ENCODE measurements at regions of chr1 and their contacts with region 1.

Region 1: GRCh38 chr1:94025383-94026340 is 95.3 kb downstream of the ABCA4 start:
- DNase-seq: no peak
- ATAC-seq: peak; percentile 60 to 69
- H3K4me3 ChIP-seq: no peak overlapping the region
- H3K27ac ChIP-seq: no peak overlapping the region
- H3K4me1 ChIP-seq: peaks cover 0 to 3% of the 10 kb centered on the region in 2 donors
- H3K27me3 ChIP-seq: no peaks in the 10 kb centered on the region
- CTCF ChIP-seq: peak; percentile 64 to 76 (median 70)
- POLR2A ChIP-seq: no peak

Region 2: GRCh38 chr1:93878889-93879586 is 146.6 kb before region 1 on chr1 and contains the start of gene DNTTIP2:
- in situ Hi-C with region 1: no loop called
- intact Hi-C with region 1: loop called (anchors 5 kb)
- DNase-seq: peak; percentile 80 to 84
- ATAC-seq: peak; percentile 94 to 97
- H3K4me3 ChIP-seq: peak within 1 kb of the TSS; percentile 80 to 99 (median 87)
- H3K27ac ChIP-seq: peak within 1 kb of the TSS; percentile 91 to 98 (median 94)
- H3K4me1 ChIP-seq: peaks cover 30 to 35% of the 10 kb centered on the region in 2 donors
- H3K27me3 ChIP-seq: no peaks in the 10 kb centered on the region
- CTCF ChIP-seq: no peak
- POLR2A ChIP-seq: peak; percentile 84 to 89
- total RNA-seq, gene DNTTIP2: 50.4 to 75.3 (median 59.1) TPM

Region 3: GRCh38 chr1:94335950-94336349 is 310.3 kb after region 1 on chr1:
- in situ Hi-C with region 1: loop called in 2 of 4 experiments (anchors 10 kb)
- intact Hi-C with region 1: loop called (anchors 1 kb)
- DNase-seq: peak; percentile 59 to 62
- ATAC-seq: peak; percentile 97 to 99
- H3K4me3 ChIP-seq: no peak overlapping the region
- H3K27ac ChIP-seq: peak overlapping the region in 1 of 4 donors; percentile 63
- H3K4me1 ChIP-seq: peaks cover 0 to 8% of the 10 kb centered on the region in 2 donors
- H3K27me3 ChIP-seq: no peaks in the 10 kb centered on the region
- CTCF ChIP-seq: peak; percentile 68 to 85 (median 82)
- POLR2A ChIP-seq: no peak

Region 4: GRCh38 chr1:94417978-94418663 is 392.5 kb after region 1 on chr1 and contains the start of gene ABCD3:
- in situ Hi-C with region 1: no loop called
- intact Hi-C with region 1: no loop called
- DNase-seq: peak; percentile 93 to 97
- ATAC-seq: peak; percentile 89 to 91
- H3K4me3 ChIP-seq: peak within 1 kb of the TSS; percentile 91 to 98 (median 94)
- H3K27ac ChIP-seq: peak within 1 kb of the TSS; percentile 86 to 93 (median 88)
- H3K4me1 ChIP-seq: peaks cover 33 to 37% of the 10 kb centered on the region in 2 donors
- H3K27me3 ChIP-seq: no peaks in the 10 kb centered on the region
- CTCF ChIP-seq: no peak
- POLR2A ChIP-seq: peak; percentile 83 to 91
- total RNA-seq, gene ABCD3: 33.4 to 42.8 (median 36.6) TPM